ENCODE measurements at regions of chr1 and their contacts with region 1.

Region 1: DNA sequence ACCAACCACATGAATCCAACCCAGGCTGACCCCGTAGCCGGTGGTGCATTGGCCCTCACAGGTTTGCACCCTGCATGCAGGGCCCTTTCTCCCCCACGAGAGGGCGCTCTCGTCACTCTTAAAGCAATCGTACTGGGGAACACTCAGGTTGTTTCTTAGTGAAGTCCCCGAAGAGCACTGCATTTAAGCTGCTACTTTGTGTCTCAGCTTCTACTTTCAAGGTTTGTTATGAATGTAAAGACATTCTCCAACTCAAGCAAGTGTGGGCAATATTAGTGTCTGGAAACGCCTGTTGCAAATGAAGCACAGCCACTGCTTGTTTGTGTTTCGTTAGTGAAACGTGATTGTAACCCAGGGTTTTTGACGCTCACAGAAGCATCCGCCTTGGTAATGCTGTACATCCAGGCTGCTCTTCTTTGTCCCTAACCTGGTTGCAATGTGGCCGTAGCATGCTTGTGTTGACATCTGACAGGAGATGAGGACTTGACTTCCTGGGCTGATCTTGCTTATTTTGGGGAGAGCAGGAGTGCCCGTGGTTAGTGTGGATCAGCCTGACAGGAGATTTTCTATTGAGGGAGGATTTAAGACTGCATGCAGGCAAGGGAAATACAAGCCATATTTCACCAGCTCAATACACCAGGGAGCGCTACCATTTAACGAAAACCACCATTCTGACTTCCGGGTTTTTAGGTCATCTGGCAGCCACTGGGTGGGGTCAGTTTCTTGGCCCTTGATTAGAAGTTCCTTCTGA is 79.8 kb downstream of the ST6GALNAC3 start:
- DNase-seq: peak; percentile 81
- H3K4me3 ChIP-seq: peak overlapping the region in 2 of 3 experiments; percentile 3 to 67
- H3K27ac ChIP-seq: no peak overlapping the region
- H3K4me1 ChIP-seq: peaks cover 10% of the 10 kb centered on the region
- H3K27me3 ChIP-seq: no peaks in the 10 kb centered on the region
- CTCF ChIP-seq: peak; percentile 94 to 97
- POLR2A ChIP-seq: no peak

Region 2: DNA sequence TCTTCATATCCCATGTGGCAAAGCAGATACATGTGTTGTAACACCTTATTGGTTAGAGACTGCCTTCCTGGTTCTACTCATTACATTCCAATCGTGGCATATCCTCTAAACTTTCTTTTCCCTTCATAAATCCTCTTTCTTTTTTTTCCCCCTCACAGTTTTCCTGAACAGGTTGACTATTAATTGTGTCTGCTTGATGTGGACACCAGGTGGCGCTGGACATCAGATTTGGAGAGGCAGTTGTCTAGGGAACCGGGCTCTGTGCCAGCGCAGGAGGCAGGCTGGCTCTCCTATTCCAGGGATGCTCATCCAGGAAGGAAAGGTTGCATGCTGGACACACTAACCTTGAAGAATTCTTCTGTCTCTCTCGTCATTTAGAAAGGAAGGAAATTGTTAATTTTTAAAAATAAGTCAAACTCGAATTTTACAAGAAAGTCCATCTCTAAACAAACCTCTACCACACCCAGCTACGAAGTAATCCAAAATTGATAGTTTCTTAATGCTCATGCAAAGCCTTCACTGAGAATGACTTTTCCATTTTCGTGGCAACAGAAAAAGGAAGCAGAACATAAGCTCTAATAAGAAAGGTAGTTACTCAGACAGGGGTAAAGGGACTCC is 162.8 kb before region 1 on chr1:
- CTCF ChIA-PET with region 1: interaction called, 7 read pairs
- POLR2A ChIA-PET with region 1: no interaction called
- dilution Hi-C with region 1: no loop called
- intact Hi-C with region 1: loop called (anchors 1 kb)
- DNase-seq: peak; percentile 81
- H3K4me3 ChIP-seq: no peak overlapping the region
- H3K27ac ChIP-seq: no peak overlapping the region
- H3K4me1 ChIP-seq: no peaks in the 10 kb centered on the region
- H3K27me3 ChIP-seq: peaks cover 2 to 3% of the 10 kb centered on the region in 2 experiments
- CTCF ChIP-seq: peak; percentile 71 to 78
- POLR2A ChIP-seq: no peak

Region 3: DNA sequence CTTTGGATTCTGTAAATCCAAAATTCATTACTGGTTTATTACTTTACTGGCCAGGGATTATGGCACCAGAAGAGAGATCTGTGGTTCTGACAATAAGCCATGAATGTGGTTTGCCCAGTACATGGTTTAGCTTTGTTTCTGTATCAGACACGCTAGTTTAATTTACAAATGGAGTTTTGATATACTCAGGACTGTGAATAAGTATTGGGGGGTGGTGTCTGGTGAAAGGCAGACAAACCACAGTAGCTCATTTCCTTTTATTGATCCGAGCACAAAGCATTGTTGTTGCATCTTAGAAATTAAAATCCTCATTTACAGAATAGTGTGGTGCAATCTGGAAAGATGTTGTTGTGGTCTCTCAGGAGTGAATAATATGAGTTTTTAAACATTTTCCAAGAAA is 16.1 kb after region 1 on chr1:
- CTCF ChIA-PET with region 1: interaction called, 20 read pairs
- POLR2A ChIA-PET with region 1: no interaction called
- dilution Hi-C with region 1: no loop called
- intact Hi-C with region 1: no loop called
- DNase-seq: no peak
- H3K4me3 ChIP-seq: no peak overlapping the region
- H3K27ac ChIP-seq: no peak overlapping the region
- H3K4me1 ChIP-seq: no peaks in the 10 kb centered on the region
- H3K27me3 ChIP-seq: no peaks in the 10 kb centered on the region
- CTCF ChIP-seq: no peak
- POLR2A ChIP-seq: no peak

Region 4: GRCh38 chr1:76279101-76279748 is 124.8 kb after region 1 on chr1:
- CTCF ChIA-PET with region 1: no interaction called
- POLR2A ChIA-PET with region 1: no interaction called
- dilution Hi-C with region 1: no loop called
- intact Hi-C with region 1: no loop called
- DNase-seq: no peak
- H3K4me3 ChIP-seq: no peak overlapping the region
- H3K27ac ChIP-seq: no peak overlapping the region
- H3K4me1 ChIP-seq: no peaks in the 10 kb centered on the region
- H3K27me3 ChIP-seq: no peaks in the 10 kb centered on the region
- CTCF ChIP-seq: no peak
- POLR2A ChIP-seq: no peak

Region 5: DNA sequence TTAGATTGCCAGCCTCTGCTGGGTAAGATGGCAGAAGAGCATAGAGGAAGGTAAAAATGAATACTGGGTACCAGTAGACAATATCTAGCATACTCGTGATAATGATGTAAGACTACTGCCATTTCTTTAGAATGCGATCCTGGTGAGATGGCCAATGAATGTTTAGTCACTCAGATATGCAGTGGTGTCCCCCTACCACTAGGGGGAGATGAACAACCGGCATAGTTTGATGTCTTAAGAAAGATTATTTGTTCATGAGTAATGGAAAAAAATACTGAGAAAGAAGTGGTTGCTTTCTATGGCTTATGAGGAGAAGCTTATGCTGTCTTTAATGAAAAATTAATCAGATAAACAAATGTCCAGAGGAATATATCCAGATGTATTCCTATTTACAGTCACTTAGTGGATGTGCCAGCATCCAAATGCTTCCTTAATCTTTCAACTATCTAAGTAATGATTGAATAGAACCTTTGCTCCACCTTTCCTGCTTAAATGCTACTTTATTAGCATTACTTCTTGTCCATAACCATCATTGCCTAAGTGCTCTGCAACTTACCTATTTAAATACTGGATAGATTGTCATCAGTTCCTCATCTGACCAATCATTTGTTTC is 176.7 kb after region 1 on chr1:
- CTCF ChIA-PET with region 1: interaction called, 20 read pairs
- POLR2A ChIA-PET with region 1: no interaction called
- dilution Hi-C with region 1: no loop called
- intact Hi-C with region 1: loop called (anchors 1 kb)
- DNase-seq: peak; percentile 76
- H3K4me3 ChIP-seq: no peak overlapping the region
- H3K27ac ChIP-seq: no peak overlapping the region
- H3K4me1 ChIP-seq: no peaks in the 10 kb centered on the region
- H3K27me3 ChIP-seq: no peaks in the 10 kb centered on the region
- CTCF ChIP-seq: peak; percentile 81 to 91
- POLR2A ChIP-seq: no peak

Region 6: GRCh38 chr1:76901158-76901767 is 746.9 kb after region 1 on chr1:
- CTCF ChIA-PET with region 1: interaction called, 3 read pairs
- POLR2A ChIA-PET with region 1: no interaction called
- dilution Hi-C with region 1: no loop called
- intact Hi-C with region 1: loop called (anchors 5 kb)
- DNase-seq: peak; percentile 41
- H3K4me3 ChIP-seq: no peak overlapping the region
- H3K27ac ChIP-seq: no peak overlapping the region
- H3K4me1 ChIP-seq: no peaks in the 10 kb centered on the region
- H3K27me3 ChIP-seq: no peaks in the 10 kb centered on the region
- CTCF ChIP-seq: peak; percentile 58 to 72
- POLR2A ChIP-seq: no peak

Region 7: DNA sequence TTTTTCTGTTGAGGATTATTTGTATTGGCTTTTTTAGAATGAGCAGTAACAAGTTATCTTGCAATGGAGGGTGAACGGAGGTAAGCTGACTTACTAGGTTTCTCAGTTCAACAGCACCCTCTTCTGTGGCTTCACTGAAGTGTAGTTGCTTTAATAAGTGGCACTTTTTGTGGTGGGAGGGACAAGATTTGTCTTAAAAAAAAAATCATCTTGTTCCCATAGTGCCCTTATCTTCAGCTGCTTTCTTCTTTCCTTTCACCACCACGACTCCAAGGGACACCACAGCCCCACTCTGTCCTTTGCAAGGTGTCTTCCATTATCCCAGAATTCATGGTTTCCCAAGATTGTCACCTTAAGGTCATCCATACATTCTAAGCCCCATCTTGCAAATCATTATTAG is 971.9 kb after region 1 on chr1:
- CTCF ChIA-PET with region 1: interaction called, 60 read pairs
- POLR2A ChIA-PET with region 1: no interaction called
- dilution Hi-C with region 1: no loop called
- intact Hi-C with region 1: loop called (anchors 1 kb)
- DNase-seq: peak; percentile 72
- H3K4me3 ChIP-seq: no peak overlapping the region
- H3K27ac ChIP-seq: no peak overlapping the region
- H3K4me1 ChIP-seq: no peaks in the 10 kb centered on the region
- H3K27me3 ChIP-seq: no peaks in the 10 kb centered on the region
- CTCF ChIP-seq: peak; percentile 37 to 55
- POLR2A ChIP-seq: no peak